ENCODE measurements at regions of chr1 and their contacts with region 1.

Region 1: DNA sequence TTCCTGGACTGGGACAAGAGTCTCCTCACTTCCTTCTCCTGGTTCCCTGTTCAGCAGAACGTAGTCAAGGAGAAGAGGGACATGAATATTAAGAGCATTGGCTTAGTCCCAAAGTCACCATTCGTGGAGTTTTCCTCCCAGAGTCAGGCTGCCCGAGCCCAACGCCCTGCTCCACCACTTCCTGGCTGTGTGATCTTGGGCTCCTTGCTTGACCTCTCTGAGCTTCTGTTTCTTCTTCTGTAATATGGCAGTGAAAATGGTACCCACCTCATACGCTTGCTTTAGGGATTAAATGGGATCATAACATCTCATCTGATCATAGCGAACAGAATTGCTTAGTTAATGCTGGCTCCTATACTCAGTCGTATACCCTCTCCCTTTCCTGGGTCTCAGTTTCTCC is 12.0 kb upstream of the CASZ1 start:
- DNase-seq: no peak
- H3K4me3 ChIP-seq: no peak overlapping the region
- H3K27ac ChIP-seq: no peak overlapping the region
- H3K4me1 ChIP-seq: peaks cover under 1 to 7% of the 10 kb centered on the region in 2 donors
- H3K27me3 ChIP-seq: peaks cover 0 to 12% of the 10 kb centered on the region in 2 donors
- CTCF ChIP-seq: no peak
- POLR2A ChIP-seq: no peak

Region 2: DNA sequence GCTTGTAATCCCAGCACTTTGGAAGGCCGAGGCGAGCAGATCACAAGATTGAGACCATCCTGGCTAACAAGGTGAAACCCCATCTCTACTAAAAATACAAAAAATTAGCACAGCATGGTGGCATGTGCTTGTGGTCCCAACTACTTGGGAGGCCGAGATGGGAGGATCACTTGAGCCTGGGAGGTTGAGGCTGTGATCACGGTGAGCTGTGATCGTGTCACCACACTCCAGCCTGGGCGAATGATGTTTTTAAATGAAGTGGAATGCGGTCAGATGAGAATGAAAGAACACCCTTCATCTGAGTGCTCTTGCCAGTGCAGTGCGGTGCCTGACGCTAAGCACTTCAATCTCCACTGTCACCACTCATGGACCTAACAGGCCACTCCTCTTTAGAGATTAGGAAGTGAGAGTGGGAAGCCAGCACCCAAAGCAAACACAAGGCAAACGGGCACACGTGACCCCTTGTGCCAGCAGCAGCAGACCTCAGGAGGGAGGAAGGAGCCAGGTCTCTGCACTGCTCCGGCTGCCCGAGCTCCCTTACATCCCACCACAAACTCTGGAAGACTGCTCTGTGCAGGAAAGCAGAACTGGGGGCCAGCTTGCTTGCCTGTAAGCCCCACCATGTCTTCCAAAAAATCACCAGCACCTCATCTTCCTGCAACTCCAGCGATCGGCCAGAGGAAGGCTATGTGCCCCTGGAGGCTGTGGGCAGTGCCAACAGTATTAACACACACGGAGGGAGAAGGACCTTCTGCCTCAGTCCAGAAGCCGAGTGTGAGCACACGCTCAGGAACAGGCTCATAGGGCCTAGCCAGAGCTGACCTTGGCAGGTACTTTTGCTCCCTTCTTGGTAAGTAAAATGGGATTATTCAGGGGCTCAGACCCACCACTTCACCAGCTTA is 908.0 kb before region 1 on chr1:
- intact Hi-C with region 1: loop called (anchors 5 kb)
- DNase-seq: no peak
- H3K4me3 ChIP-seq: peak overlapping the region in 2 of 3 donors; percentile 7 to 16
- H3K27ac ChIP-seq: peak overlapping the region; percentile 41 to 57
- H3K4me1 ChIP-seq: peaks cover 0 to 19% of the 10 kb centered on the region in 2 donors
- H3K27me3 ChIP-seq: no peaks in the 10 kb centered on the region
- CTCF ChIP-seq: peak in 1 of 3 donors; percentile 7
- POLR2A ChIP-seq: no peak